Right ventricle myocardium superior (tissue), 1 donor: ENCODE measurements at regions of chr2 and their contacts with region 1.

Region 1: DNA sequence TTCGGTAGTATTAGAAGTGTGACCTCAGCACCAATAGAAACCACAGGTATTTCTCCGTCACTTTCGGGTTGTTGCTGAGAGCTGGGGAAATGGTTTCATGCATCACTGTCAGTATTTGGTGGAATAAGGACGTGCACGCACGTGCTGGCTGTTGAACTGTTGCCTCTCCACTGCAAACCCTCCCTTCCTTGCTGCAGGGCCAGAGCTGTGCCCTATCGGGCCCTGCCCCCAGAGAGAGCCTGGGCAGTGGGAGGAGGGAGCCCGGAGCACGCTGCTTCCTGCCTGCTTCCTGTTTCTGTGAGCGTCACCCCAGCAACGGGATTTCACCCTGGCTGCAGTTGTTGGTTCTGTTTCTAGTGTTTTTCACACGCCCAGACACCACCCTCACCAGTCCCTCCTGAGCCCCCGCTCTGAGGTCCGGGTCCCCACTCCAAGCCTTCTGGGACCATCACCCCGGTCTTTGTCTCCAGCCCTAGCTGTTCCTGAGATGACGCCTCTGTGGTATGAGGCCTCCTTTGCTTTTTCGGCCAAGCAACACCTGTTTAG is 47.4 kb downstream of the LRRFIP1 start:
- DNase-seq: peak; percentile 93
- ATAC-seq: peak; percentile 83

Region 2: GRCh38 chr2:237744613-237745249 is 69.9 kb after region 1 on chr2:
- intact Hi-C with region 1: loop called (anchors 2 kb)
- DNase-seq: peak; percentile 89
- ATAC-seq: peak; percentile 87